ENCODE measurements at regions of chr17 and their contacts with region 1.

Region 1: GRCh38 chr17:68972119-68972704 is 17.0 kb upstream of the ABCA8 start:
- DNase-seq: no peak
- H3K4me3 ChIP-seq: no peak overlapping the region
- H3K27ac ChIP-seq: peak overlapping the region in 49 of 59 donors; percentile 5 to 89 (median 64)
- H3K27me3 ChIP-seq: no peaks in the 10 kb centered on the region
- CTCF ChIP-seq: peak; percentile 55 to 95 (median 79)

Region 2: DNA sequence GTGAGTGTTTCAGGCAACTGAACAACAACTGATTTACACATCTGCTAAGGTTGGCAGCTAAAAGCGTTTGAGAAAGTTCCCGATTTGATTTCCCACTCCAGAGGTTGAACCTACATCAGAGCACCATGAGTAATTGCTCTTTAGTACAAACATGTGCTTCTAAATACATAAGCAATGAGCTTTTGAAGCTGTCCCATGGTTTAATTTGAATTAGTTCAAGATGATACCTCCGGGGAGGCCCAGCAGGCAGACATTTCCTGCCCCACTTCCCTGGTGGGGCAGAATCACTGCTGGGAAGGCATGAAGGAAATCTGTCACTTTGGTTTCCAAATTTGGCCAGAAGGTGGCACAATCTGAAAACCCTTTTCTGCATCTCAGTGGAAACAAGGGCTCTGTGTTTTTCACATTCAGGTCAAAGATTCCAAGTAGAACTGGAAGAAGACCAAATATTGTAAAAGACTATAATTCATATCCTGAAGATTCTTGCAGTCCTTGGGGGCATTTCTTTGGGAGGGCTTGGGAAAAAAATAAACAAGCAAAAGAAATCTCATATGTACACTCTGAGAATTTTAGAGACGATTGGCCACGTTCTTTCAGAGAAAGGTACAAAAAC is 194.9 kb before region 1 on chr17:
- intact Hi-C with region 1: loop called (anchors 2 to 5 kb)
- DNase-seq: peak in 4 of 10 donors; percentile 33 to 67 (median 56)
- H3K4me3 ChIP-seq: peak overlapping the region in 31 of 59 donors; percentile 5 to 53 (median 22)
- H3K27ac ChIP-seq: peak overlapping the region; percentile 52 to 98 (median 90)
- H3K27me3 ChIP-seq: no peaks in the 10 kb centered on the region
- CTCF ChIP-seq: peak; percentile 62 to 97 (median 88)

Region 3: GRCh38 chr17:68794636-68795434 is 177.4 kb before region 1 on chr17:
- intact Hi-C with region 1: loop called in 1 of 2 experiments (anchors 5 kb)
- DNase-seq: peak in 9 of 10 donors; percentile 42 to 86 (median 73)
- H3K4me3 ChIP-seq: peak overlapping the region in 49 of 59 donors; percentile 0 to 54 (median 27)
- H3K27ac ChIP-seq: peak overlapping the region; percentile 70 to 100 (median 98)
- H3K27me3 ChIP-seq: peaks cover 0 to 5% (median 0%) of the 10 kb centered on the region in 45 donors
- CTCF ChIP-seq: peak; percentile 53 to 84 (median 70)

Region 4: DNA sequence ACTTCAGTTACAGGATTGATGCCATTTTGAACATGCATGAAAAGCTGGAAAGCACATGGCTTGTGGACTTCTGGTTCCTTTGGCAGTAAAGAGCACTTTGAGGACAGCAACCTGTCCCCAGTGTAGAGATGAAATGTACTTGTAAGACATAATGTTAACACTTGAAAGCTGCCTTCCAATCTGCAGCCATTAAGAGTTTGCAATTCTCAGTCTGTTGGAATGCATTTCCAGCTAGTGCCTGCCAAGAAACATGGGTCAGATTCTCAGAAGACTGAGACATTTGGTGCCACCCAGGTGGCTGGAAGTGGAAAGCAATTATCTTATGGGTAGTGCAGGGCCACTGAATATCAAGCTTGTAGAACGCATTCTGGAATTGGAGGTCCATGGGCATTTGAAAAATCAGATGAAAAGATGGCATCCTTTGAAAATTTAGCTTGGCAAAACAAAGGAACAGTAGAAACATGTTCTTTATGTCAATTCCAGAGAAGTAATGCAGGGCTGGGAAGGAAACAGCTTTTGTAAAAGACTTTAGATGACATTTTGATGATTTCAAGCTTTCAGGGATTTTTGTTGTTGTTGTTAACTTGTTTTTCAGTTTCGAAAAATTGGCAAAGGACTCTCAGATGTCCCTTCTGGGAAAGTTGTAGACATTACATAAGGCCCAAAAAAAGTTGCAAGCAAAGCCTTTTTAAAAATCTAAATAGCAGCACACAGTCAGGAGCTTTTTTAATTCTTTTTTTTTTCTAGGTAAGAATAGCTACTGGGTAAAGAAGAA is 164.0 kb before region 1 on chr17:
- intact Hi-C with region 1: no loop called
- DNase-seq: peak in 1 of 10 donors; percentile 16
- H3K4me3 ChIP-seq: no peak overlapping the region
- H3K27ac ChIP-seq: no peak overlapping the region
- H3K27me3 ChIP-seq: no peaks in the 10 kb centered on the region
- CTCF ChIP-seq: no peak

Region 5: GRCh38 chr17:68909066-68909465 is 63.1 kb before region 1 on chr17:
- intact Hi-C with region 1: loop called (anchors 2 to 5 kb)
- DNase-seq: no peak
- H3K4me3 ChIP-seq: no peak overlapping the region
- H3K27ac ChIP-seq: peak overlapping the region in 58 of 59 donors; percentile 21 to 98 (median 92)
- H3K27me3 ChIP-seq: no peaks in the 10 kb centered on the region
- CTCF ChIP-seq: no peak

Region 6: GRCh38 chr17:69192754-69193153 is 220.5 kb after region 1 on chr17:
- intact Hi-C with region 1: no loop called
- DNase-seq: no peak
- H3K4me3 ChIP-seq: no peak overlapping the region
- H3K27ac ChIP-seq: no peak overlapping the region
- H3K27me3 ChIP-seq: no peaks in the 10 kb centered on the region
- CTCF ChIP-seq: no peak

Region 7: DNA sequence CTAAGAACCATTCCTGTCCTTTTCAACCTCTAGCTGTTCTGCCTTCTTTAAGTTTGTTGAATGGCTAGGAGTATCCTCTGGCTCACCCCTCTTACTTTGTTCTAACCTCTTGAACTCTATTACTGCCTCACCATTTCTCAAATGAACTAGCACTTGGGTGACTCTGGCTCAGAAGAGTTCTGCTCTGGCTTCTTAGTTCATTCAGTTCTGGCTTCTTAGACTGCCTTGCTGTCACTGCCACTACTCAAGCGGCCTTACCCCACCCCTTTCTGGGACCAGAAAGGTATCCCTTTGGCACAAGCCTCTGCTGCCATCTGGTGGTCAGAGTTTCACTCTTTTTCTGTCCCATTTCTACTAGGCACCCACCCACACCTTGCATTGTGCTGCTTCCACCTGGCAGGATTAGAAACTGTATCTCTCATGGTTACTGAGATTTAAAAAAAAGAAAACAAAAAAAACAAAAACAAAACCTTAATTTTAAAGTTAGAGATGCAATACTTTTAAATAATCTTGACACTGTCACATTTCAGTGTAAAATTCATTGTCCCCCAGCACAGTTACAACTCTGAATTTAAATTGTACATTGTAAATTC is 263.2 kb after region 1 on chr17:
- intact Hi-C with region 1: loop called (anchors 5 to 10 kb)
- DNase-seq: peak; percentile 32 to 84 (median 72)
- H3K4me3 ChIP-seq: no peak overlapping the region
- H3K27ac ChIP-seq: peak overlapping the region in 20 of 59 donors; percentile 2 to 70 (median 27)
- H3K27me3 ChIP-seq: no peaks in the 10 kb centered on the region
- CTCF ChIP-seq: peak; percentile 75 to 98 (median 88)

Measured in dorsolateral prefrontal cortex (tissue), 120 donors.